BJ (cell line): ENCODE measurements at regions of chr15 and their contacts with region 1.

Region 1: DNA sequence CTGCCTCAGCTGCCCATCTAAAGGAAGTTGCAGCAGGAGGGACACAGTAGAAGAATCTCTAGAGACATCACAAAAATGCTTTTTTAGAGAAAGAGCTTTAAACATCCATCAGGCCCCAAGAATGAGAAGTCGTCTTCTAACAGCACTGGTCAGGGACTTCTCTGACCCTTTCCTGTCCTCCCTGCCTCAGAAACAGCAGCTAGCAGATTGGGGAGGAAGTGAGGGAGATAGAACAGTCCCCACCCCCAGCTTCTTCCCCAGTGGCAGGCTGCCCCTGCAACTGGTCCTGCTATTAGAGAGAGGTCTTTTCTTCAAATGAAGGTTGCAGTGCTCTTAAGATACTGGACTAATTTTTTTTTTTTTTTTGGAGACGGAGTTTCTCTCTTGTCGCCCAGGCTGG is 55.1 kb downstream of the PDE8A start:
- DNase-seq: no peak
- H3K4me3 ChIP-seq: no peak overlapping the region
- H3K27me3 ChIP-seq: no peaks in the 10 kb centered on the region
- CTCF ChIP-seq: no peak

Region 2: GRCh38 chr15:84616235-84616634 is 420.5 kb before region 1 on chr15:
- CTCF ChIA-PET with region 1: no interaction called
- POLR2A ChIA-PET with region 1: no interaction called
- DNase-seq: no peak
- H3K4me3 ChIP-seq: no peak overlapping the region
- H3K27me3 ChIP-seq: no peaks in the 10 kb centered on the region
- CTCF ChIP-seq: no peak

Region 3: DNA sequence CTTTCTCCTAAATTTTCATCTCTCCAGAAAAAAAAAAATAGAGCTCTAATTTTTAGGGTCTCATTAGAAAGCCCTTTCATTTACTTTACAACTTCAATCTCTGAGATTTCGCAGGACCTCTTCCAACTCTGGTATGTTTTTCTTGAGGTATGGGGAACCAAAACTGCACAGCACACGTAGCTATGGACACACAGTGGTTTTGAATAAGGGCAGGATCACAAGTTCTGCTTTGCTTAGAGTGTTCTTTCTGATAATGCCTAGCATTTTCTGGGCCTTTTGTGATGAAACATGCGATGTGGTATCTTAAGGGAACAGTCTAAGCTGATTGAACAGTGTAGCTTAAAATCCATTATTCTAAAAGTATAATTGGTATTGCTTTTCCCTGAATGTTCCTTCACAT is 263.0 kb before region 1 on chr15:
- CTCF ChIA-PET with region 1: no interaction called
- POLR2A ChIA-PET with region 1: interaction called, 12 read pairs
- DNase-seq: no peak
- H3K4me3 ChIP-seq: no peak overlapping the region
- H3K27me3 ChIP-seq: no peaks in the 10 kb centered on the region
- CTCF ChIP-seq: no peak

Region 4: GRCh38 chr15:86483936-86484335 is 1447.2 kb after region 1 on chr15:
- CTCF ChIA-PET with region 1: no interaction called
- POLR2A ChIA-PET with region 1: no interaction called
- DNase-seq: no peak
- H3K4me3 ChIP-seq: no peak overlapping the region
- H3K27me3 ChIP-seq: no peaks in the 10 kb centered on the region
- CTCF ChIP-seq: no peak